Activated B cell treated with CpG ODN at 0.5 μM for 24 hours (primary cell): ENCODE measurements at regions of chr4 and their contacts with region 1.

Region 1: GRCh38 chr4:70839589-70840093 is at the start of gene GRSF1:
- DNase-seq: peak; percentile 88
- ATAC-seq: peak; percentile 84
- H3K4me3 Mint-ChIP-seq: peak within 1 kb of the TSS; percentile 93
- H3K27ac Mint-ChIP-seq: peak within 1 kb of the TSS; percentile 93
- H3K4me1 Mint-ChIP-seq: peaks cover 63% of the 10 kb centered on the region
- H3K27me3 Mint-ChIP-seq: no peaks in the 10 kb centered on the region
- CTCF ChIP-seq: no peak
- total RNA-seq, gene GRSF1: 61.1 and 63.5 TPM in 2 replicates

Region 2: GRCh38 chr4:70678383-70678999 is 161.2 kb before region 1 on chr4:
- CTCF ChIA-PET with region 1: no interaction called
- POLR2A ChIA-PET with region 1: interaction called, 11 read pairs
- intact Hi-C with region 1: no loop called
- DNase-seq: no peak
- ATAC-seq: no peak
- H3K4me3 Mint-ChIP-seq: no peak overlapping the region
- H3K27ac Mint-ChIP-seq: peak overlapping the region; percentile 53
- H3K4me1 Mint-ChIP-seq: peaks cover 56% of the 10 kb centered on the region
- H3K27me3 Mint-ChIP-seq: no peaks in the 10 kb centered on the region
- CTCF ChIP-seq: no peak

Region 3: DNA sequence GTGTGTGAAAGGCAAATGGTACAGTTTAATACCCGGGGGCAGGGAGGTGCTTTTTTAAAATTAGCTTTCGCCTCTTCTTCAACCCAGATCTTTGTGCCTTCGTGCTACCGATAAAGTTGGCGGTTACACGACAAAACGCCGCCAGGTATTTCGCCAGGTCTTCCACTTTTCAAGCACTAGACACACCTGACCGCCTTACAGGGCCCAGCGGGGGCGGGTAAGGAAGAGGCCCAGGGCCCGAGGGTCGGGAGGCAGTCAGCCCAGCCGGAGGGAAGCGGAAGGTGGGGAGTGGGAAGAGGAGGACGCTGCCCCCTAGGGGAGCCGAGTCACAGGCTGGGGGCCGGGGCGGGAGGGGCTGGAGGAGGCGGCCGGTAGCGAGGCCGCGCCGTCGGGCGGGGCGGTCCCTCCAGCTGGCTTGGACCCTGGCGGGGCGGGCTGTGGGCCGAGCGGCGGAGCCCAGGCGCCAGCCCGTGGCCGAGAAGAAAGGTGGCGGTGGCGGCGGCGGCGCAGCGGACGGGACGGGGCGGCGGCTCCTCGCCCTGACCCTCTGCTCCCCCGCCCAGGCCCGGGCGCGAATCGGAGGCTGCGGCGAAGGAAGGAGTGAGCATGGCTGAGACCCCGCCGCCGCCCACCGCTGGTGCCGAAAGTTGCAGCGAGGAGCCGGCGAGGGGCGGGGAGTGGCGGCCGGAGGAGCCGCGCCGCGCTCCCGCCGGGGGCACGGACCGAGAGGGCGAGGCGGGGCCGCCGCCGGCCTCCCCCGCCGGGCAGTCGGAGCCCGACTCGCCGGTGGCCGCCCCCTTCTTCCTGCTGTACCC is 135.1 kb before region 1 on chr4:
- CTCF ChIA-PET with region 1: no interaction called
- POLR2A ChIA-PET with region 1: interaction called, 17 read pairs
- intact Hi-C with region 1: loop called (anchors 1 kb)
- DNase-seq: peak; percentile 69
- ATAC-seq: peak; percentile 67
- H3K4me3 Mint-ChIP-seq: peak overlapping the region; percentile 93
- H3K27ac Mint-ChIP-seq: peak overlapping the region; percentile 89
- H3K4me1 Mint-ChIP-seq: peaks cover 34% of the 10 kb centered on the region
- H3K27me3 Mint-ChIP-seq: no peaks in the 10 kb centered on the region
- CTCF ChIP-seq: no peak

Region 4: DNA sequence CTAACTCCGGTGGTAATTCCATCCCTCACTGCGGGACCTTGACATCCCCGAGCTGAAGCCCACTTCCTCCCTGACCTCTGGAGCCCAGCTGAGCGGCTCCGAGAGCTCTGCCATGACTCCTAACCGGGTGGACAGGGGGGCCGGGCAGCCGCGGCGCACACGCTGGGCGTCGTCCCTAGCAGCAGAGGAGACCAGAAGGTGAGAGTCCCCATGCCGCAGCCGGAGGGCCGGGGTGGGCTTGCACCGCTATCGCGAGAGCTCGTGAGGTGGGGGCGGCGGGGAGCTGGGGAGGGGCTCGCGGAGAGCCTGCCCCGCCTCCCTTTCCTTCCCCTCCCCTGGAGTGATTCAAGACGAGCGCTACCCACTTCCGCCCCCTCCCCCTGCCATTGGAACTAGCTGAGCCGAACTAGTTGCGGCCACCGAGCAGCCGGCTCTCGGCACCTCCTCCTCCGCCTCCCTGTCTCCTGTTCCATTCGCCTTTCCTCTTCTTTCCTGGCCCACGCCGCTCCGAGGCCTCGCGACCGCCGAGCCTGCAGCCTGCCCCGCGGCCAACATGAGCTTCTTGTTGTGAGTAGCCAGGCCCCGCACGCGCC is 62.4 kb after region 1 on chr4 and contains the start of gene MOB1B:
- CTCF ChIA-PET with region 1: interaction called, 11 read pairs
- POLR2A ChIA-PET with region 1: interaction called, 80 read pairs
- intact Hi-C with region 1: loop called (anchors 1 kb)
- DNase-seq: peak; percentile 73
- ATAC-seq: peak; percentile 96
- H3K4me3 Mint-ChIP-seq: peak within 1 kb of the TSS; percentile 98
- H3K27ac Mint-ChIP-seq: peak within 1 kb of the TSS; percentile 85
- H3K4me1 Mint-ChIP-seq: peaks cover 26% of the 10 kb centered on the region
- H3K27me3 Mint-ChIP-seq: no peaks in the 10 kb centered on the region
- CTCF ChIP-seq: no peak
- total RNA-seq, gene MOB1B: 22.2 and 23.4 TPM in 2 replicates

Region 5: DNA sequence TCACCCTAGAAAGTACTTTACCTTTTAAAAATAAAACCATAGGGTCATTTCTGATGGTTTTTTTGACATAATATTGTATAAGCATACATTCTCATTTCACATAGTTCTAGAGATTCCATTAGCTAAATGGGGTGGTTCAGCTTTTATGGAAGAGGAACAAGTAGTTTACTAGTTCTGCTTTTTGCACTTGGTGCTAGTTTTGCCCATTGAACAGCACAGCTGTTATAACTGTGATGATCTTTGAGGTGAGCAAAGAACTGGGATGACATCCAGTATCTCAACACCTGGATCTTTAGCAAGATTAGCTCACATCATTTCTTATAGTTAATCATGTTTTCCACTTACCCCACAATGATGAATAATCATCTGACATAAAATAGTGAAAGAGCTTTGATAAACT is 103.5 kb after region 1 on chr4:
- CTCF ChIA-PET with region 1: interaction called, 3 read pairs
- POLR2A ChIA-PET with region 1: interaction called, 5 read pairs
- intact Hi-C with region 1: loop called (anchors 2 kb)
- DNase-seq: no peak
- ATAC-seq: peak; percentile 78
- H3K4me3 Mint-ChIP-seq: no peak overlapping the region
- H3K27ac Mint-ChIP-seq: peak overlapping the region; percentile 59
- H3K4me1 Mint-ChIP-seq: peaks cover 37% of the 10 kb centered on the region
- H3K27me3 Mint-ChIP-seq: no peaks in the 10 kb centered on the region
- CTCF ChIP-seq: no peak

Region 6: GRCh38 chr4:70976252-70976651 is 136.6 kb after region 1 on chr4:
- CTCF ChIA-PET with region 1: no interaction called
- POLR2A ChIA-PET with region 1: no interaction called
- intact Hi-C with region 1: no loop called
- DNase-seq: no peak
- ATAC-seq: no peak
- H3K4me3 Mint-ChIP-seq: no peak overlapping the region
- H3K27ac Mint-ChIP-seq: no peak overlapping the region
- H3K4me1 Mint-ChIP-seq: peaks cover 20% of the 10 kb centered on the region
- H3K27me3 Mint-ChIP-seq: no peaks in the 10 kb centered on the region
- CTCF ChIP-seq: no peak

Region 7: DNA sequence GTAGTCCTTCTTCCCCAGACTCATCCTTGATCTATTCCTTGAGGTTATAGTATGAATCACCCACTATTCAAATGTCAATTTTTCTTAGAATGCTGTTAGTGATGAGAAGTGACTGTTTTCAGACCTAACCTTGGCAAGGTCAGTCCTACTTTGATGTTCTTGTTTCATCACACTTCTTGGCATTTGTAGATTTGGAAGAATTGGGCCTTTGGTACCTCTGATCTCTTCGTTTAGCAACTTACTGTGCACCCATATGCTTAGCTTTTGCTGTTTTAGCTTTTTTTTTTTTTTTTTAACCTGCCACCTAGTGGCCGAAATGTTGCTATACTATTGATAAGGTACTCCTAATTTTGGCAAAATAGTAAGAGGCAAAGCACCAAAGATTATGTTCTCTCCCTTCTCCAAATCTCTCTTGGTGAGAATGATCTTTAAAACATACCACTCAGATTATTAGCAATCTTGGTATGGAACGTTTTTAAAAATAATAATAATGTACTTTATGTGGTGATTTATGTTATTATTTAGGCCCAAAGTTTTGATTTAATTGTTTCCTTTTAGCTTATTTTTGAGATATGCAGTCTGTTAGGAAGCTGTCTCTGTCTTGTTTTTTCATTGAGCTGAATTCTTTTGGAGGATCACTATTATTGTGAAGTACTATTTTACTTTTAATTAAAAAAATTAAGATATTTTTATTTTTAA is 170.4 kb after region 1 on chr4:
- CTCF ChIA-PET with region 1: interaction called, 6 read pairs
- POLR2A ChIA-PET with region 1: interaction called, 9 read pairs
- intact Hi-C with region 1: loop called (anchors 1 kb)
- DNase-seq: no peak
- ATAC-seq: peak; percentile 46
- H3K4me3 Mint-ChIP-seq: peak overlapping the region; percentile 2
- H3K27ac Mint-ChIP-seq: peak overlapping the region; percentile 64
- H3K4me1 Mint-ChIP-seq: peaks cover 65% of the 10 kb centered on the region
- H3K27me3 Mint-ChIP-seq: no peaks in the 10 kb centered on the region
- CTCF ChIP-seq: peak; percentile 56